PC-3 (cell line): ENCODE measurements at regions of chr15 and their contacts with region 1.

Region 1: DNA sequence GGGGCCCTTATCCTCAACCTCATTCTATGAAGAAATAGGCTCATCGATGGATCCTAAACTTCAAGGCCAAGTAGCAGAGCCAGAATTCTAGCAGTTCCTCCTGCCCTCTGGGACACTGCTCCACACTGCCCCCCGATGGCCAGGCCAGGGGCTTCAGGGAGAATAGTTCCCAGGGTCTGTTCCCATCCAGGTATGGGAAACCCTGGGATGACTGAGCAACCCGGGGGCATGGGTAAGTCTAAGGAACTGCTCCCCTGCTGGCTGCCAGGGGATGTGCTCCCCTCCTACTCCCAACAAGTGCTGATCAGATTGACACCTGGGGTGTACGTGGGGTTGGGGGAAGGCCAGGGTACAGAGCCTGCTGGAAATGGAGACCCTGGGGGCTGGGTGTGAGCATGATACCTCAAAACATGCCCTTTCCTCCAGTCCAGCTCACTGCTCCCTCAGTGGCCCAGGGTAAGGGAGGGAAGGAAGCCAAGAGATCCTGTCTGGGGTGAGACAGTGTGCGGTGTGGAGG is 7.6 kb downstream of the ULK3 start:
- DNase-seq: peak; percentile 88
- ATAC-seq: peak; percentile 94
- H3K4me3 ChIP-seq: no peak overlapping the region
- H3K27ac ChIP-seq: no peak overlapping the region
- H3K4me1 ChIP-seq: no peaks in the 10 kb centered on the region
- H3K27me3 ChIP-seq: no peaks in the 10 kb centered on the region
- CTCF ChIP-seq: peak; percentile 96

Region 2: GRCh38 chr15:74780523-74781430 is 54.6 kb before region 1 on chr15:
- CTCF ChIA-PET with region 1: no interaction called
- POLR2A ChIA-PET with region 1: no interaction called
- intact Hi-C with region 1: loop called (anchors 1 kb)
- DNase-seq: no peak
- ATAC-seq: no peak
- H3K4me3 ChIP-seq: peak overlapping the region; percentile 78; the same call in 1 of the 2 replicates
- H3K27ac ChIP-seq: no peak overlapping the region
- H3K4me1 ChIP-seq: peaks cover 18% of the 10 kb centered on the region
- H3K27me3 ChIP-seq: no peaks in the 10 kb centered on the region
- CTCF ChIP-seq: no peak